Heart left ventricle (tissue), 16 donors: ENCODE measurements at regions of chr15 and their contacts with region 1.

Region 1: GRCh38 chr15:57591646-57592367 is at the start of gene MYZAP:
- DNase-seq: peak; percentile 66 to 82 (median 78)
- ATAC-seq: peak in 3 of 4 donors; percentile 28 to 72 (median 68)
- H3K4me3 ChIP-seq: peak within 1 kb of the TSS; percentile 47 to 94 (median 75)
- H3K27ac ChIP-seq: peak within 1 kb of the TSS; percentile 79 to 96 (median 94)
- H3K4me1 ChIP-seq: peaks cover 0 to 53% (median 23%) of the 10 kb centered on the region in 12 donors
- H3K27me3 ChIP-seq: peaks cover 0 to 6% (median 0%) of the 10 kb centered on the region in 9 donors
- CTCF ChIP-seq: peak in 2 of 12 donors; percentile 11 to 15
- POLR2A ChIP-seq: peak in 1 of 2 donors; percentile 91
- total RNA-seq, gene MYZAP: 359 to 1,065 (median 670) TPM

Region 2: GRCh38 chr15:57183041-57183440 is 408.8 kb before region 1 on chr15:
- intact Hi-C with region 1: no loop called
- DNase-seq: no peak
- ATAC-seq: no peak
- H3K4me3 ChIP-seq: no peak overlapping the region
- H3K27ac ChIP-seq: peak overlapping the region in 3 of 12 donors; percentile 11 to 36 (median 13)
- H3K4me1 ChIP-seq: peaks cover 0 to 23% (median 13%) of the 10 kb centered on the region in 12 donors
- H3K27me3 ChIP-seq: no peaks in the 10 kb centered on the region
- CTCF ChIP-seq: no peak
- POLR2A ChIP-seq: no peak

Region 3: DNA sequence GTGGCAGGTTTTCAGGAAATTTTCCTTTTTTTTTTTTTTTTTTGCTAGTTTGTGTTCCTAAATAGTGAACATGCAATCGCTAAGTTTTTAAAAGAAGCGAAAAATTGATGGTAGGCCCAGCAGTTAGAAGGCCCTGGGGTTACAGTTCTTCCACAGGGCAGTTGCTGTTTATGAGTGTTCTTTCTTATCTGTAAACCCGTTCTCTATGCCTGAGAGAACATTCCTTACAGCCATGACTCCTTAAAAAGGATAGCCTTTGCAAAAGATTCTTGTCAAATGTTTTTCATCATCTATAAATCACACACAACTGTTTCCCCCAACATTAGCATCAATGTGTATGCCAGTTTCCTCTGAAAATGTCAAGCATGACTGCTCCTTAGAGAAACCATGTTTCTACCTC is 23.9 kb before region 1 on chr15:
- intact Hi-C with region 1: loop called in 3 of 10 experiments (anchors 1 to 5 kb)
- DNase-seq: no peak
- ATAC-seq: no peak
- H3K4me3 ChIP-seq: no peak overlapping the region
- H3K27ac ChIP-seq: peak overlapping the region in 4 of 12 donors; percentile 69 to 88 (median 70)
- H3K4me1 ChIP-seq: peaks cover 0 to 25% (median 9%) of the 10 kb centered on the region in 12 donors
- H3K27me3 ChIP-seq: no peaks in the 10 kb centered on the region
- CTCF ChIP-seq: no peak
- POLR2A ChIP-seq: no peak

Region 4: DNA sequence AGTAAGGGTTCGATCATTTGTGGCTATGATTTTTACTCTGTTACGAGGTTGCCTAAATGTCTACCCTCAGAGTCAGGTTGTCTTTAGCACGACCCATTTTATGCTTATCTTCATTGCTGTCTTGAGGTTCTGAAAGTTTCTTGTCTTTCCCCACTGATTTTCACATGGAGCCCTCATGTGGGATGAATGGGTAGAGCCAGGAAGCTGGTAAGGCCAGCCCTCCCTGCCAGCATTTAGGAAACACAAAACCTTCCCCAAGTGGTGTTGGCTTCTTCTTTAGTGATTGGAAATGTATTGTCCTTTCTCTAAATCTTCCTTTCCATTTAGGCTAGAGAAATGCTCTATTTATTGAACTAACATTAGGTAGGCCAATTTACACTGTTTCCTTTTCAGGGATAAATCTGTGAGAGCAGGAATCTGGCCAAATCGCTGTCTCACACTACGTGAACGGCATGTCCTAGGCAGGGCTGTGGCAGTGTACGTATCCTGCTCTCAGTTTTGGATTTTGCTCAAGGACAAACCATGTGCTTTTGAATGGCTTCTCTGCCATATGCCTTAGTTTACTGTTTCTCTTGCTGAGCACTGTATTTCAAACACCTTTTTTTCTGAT is 43.6 kb after region 1 on chr15:
- intact Hi-C with region 1: loop called in 2 of 10 experiments (anchors 5 kb)
- DNase-seq: peak in 4 of 5 donors; percentile 53 to 77 (median 59)
- ATAC-seq: peak; percentile 79 to 87 (median 84)
- H3K4me3 ChIP-seq: no peak overlapping the region
- H3K27ac ChIP-seq: peak overlapping the region; percentile 67 to 92 (median 80)
- H3K4me1 ChIP-seq: peaks cover 0 to 81% (median 45%) of the 10 kb centered on the region in 12 donors
- H3K27me3 ChIP-seq: no peaks in the 10 kb centered on the region
- CTCF ChIP-seq: peak in 6 of 12 donors; percentile 2 to 33 (median 26)
- POLR2A ChIP-seq: no peak